ENCODE measurements at regions of chr1 and their contacts with region 1.

Region 1: GRCh38 chr1:11641776-11642305 is 12.4 kb downstream of the FBXO2 start:
- DNase-seq: no peak
- H3K4me3 ChIP-seq: no peak overlapping the region
- H3K27ac ChIP-seq: no peak overlapping the region
- H3K4me1 ChIP-seq: no peaks in the 10 kb centered on the region
- H3K27me3 ChIP-seq: no peaks in the 10 kb centered on the region
- CTCF ChIP-seq: no peak

Region 2: DNA sequence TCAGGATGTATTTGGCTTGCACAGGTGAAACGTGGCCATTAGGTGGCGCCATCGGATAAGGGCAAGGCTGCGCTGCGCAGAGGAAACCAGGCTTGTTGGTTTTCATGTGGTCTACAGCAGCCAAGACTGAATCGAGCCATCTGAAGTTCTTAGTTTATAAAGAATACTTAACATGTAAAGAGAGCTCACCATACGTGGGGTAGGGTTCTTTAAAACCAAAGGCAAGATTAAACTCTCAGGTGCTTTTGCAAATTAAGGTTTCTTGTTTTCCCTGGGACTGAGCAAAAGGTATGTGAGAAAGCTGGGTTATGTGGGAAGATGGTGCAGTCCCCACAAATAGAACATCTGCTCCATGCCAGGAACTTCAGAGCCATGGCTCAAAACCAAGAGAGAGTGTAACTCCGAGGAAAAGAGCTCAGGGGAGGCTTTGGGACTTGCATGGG is 604.1 kb before region 1 on chr1:
- intact Hi-C with region 1: loop called (anchors 5 kb)
- DNase-seq: peak; percentile 86
- H3K4me3 ChIP-seq: no peak overlapping the region
- H3K27ac ChIP-seq: no peak overlapping the region
- H3K4me1 ChIP-seq: no peaks in the 10 kb centered on the region
- H3K27me3 ChIP-seq: no peaks in the 10 kb centered on the region
- CTCF ChIP-seq: peak; percentile 92

Region 3: DNA sequence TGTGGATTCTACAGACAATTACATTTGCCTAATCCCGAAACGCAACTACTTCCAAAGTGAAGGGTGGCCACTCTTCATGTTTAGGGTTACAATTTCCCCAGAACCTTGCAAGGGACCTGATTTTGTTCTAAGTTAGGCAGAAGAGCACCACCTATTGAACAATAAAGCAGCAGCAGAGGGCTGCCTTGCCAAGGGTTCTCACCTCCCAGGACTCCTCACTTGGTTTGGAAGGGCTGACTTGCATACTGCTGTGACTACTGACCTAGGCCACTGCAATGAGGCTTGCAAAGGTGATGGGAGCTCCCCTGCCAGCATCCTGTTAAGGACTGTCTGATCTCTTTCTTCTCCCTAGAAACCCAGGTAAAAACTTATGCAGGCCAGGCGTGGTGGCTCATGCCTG is 393.7 kb before region 1 on chr1:
- intact Hi-C with region 1: loop called (anchors 5 kb)
- DNase-seq: no peak
- H3K4me3 ChIP-seq: no peak overlapping the region
- H3K27ac ChIP-seq: no peak overlapping the region
- H3K4me1 ChIP-seq: no peaks in the 10 kb centered on the region
- H3K27me3 ChIP-seq: no peaks in the 10 kb centered on the region
- CTCF ChIP-seq: no peak

Region 4: GRCh38 chr1:11337580-11338073 is 304.2 kb before region 1 on chr1:
- intact Hi-C with region 1: loop called (anchors 5 kb)
- DNase-seq: peak; percentile 50
- H3K4me3 ChIP-seq: no peak overlapping the region
- H3K27ac ChIP-seq: no peak overlapping the region
- H3K4me1 ChIP-seq: no peaks in the 10 kb centered on the region
- H3K27me3 ChIP-seq: peaks cover 6% of the 10 kb centered on the region
- CTCF ChIP-seq: peak; percentile 61